Left colon (tissue), 2 donors: ENCODE measurements at regions of chr14 and their contacts with region 1.

Region 1: DNA sequence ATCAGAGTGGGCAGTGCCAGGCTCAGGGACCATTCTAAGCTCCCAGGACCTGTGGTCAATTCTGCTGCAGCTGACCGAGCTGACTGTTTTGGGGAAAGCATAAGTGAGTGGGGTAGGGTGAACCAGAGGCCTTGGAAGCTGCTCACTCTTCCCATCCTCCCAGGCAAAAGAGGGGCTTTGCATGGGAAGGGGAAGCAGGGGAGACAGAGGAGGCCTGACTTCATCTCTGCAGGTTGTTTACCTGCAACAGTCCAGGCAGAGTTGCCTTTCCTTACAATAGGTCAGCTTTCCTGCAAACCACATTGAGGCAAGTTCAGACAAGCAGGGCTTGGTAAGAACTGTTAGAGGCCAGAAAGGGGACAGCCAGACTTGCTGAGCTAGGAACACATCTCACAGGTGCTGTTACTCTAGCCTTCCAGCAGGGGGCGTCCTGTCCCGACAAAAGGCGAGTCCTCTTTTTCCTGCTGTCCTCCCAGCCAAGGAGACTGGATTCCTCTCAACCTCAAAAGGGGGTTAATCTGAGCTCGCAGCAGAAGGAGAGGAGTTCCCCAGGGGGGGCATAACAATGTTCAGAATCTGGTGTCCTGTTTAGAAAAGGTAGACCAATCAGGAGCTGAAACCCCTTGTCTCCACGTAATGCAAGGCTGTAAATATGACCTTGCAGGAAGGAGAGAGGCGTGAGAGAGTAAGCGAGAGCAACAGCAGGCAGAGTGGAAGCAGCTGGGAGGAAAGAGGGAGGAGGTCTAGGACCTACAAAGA is 4.3 kb upstream of the DHRS2 start:
- DNase-seq: peak; percentile 57 to 68
- ATAC-seq: peak; percentile 93

Region 2: DNA sequence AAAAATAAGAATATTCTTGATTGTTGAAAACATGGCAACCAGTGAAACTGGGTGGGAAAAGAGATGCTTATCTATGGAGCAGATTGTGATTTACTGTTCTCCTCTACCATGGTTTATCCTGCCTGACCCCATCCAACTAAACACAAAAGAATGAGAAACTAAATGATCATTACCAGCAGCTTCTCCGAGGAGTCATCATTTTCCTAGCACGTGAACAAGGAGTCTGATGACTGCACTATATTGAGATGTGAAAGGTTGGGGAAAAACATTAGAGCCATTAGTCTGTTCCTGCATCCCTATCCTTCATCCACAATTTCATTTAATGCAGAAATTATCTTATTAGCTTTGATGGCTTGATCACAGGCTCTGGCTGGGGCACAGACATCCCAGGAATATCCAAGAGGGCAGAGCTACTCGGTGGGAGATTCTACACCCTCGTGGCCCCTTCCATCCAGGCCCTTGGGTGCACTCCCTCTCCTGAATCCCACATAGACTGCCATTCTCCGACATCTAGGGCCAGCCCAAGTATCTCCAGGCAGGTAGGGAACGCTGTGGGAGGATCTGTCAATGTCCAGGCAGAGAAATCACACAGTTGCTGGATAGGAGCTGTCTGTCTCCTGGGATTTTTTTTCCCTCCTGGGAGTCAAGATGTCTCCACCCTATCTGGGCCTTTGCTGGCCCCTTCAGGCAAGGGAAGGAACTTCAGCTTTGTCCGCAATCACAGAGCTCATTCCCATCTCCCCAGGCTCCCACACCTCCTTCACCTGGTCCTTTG is 278.4 kb after region 1 on chr14:
- intact Hi-C with region 1: loop called in 1 of 2 experiments (anchors 5 kb)
- DNase-seq: peak in 1 of 2 donors; percentile 62
- ATAC-seq: peak; percentile 97

Region 3: DNA sequence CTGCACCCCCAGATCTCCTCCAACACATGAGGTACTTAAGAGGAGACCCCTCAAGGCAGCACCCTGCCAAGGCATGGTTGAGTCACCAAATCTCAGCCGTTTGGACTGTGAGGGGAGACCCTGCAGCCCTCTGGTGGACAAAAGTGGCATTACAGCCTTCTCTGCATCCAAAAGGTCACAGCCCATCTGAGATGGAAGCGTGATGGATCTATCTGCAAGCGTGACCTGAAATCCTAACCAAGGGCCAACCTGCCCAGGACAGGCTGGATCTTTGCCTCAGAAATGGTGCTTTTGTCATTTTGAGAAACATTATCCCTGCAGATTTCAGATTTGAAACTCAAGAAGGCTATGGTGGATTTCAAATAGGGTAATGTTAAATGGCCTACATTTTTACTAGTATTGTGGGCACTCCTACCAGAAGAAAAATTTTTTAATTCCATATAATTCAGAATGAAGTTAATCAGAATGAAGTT is 298.0 kb after region 1 on chr14:
- intact Hi-C with region 1: loop called in 1 of 2 experiments (anchors 5 kb)
- DNase-seq: peak; percentile 60 to 89
- ATAC-seq: peak; percentile 84